ENCODE measurements at regions of chr1 and their contacts with region 1.

Region 1: DNA sequence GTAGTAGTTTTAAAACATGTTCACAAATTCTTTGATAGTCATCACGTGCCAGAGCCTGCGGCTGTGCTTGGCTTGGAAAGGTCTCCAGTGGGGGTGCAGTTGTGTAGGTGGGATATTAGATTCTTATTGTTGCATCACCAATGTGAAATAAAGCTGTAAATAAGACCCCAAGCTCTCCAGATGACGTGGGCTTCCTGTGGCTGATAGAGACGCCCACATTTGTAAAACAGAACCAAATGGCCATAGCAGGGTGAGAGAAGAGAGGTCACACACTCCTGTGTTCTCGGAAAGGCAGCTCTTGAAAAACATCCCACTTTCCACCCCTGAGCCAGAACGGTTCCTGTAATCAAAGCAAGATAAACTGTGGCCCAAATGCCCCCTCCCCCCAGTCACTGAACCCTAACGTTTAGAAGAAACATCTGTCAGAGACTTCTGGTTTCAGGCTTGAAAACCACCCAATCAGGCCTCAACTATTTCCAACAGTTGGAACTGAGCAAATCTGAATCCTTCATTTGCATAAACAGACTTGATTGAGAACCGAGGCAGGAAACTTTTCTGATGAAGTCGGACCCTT is 6.6 kb upstream of the NTPCR start:
- DNase-seq: no peak
- H3K4me3 ChIP-seq: no peak overlapping the region
- H3K27ac ChIP-seq: no peak overlapping the region
- H3K4me1 ChIP-seq: no peaks in the 10 kb centered on the region
- H3K27me3 ChIP-seq: no peaks in the 10 kb centered on the region
- CTCF ChIP-seq: no peak
- EP300 ChIP-seq: no peak
- POLR2A ChIP-seq: no peak

Region 2: DNA sequence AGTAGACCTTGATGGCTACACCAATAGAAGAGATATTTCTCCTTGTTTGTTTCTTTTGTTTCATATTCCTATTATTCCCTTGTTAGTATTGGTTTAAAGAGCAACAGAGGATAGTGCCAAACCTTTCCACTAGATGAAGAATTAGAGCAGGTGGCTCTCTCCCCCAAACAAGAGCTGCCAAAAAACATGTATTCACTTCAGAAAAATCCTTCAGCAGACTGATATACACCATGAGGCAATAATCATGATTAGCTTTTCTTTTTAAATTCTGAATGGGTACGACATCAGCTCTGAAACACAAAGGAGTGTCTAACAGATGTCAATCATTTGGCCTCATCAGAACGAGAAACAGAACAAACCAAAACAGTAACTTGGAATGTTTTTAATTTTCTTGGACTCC is 205.8 kb before region 1 on chr1:
- in situ Hi-C with region 1: no loop called
- intact Hi-C with region 1: no loop called
- DNase-seq: no peak
- H3K4me3 ChIP-seq: no peak overlapping the region
- H3K27ac ChIP-seq: no peak overlapping the region
- H3K4me1 ChIP-seq: no peaks in the 10 kb centered on the region
- H3K27me3 ChIP-seq: no peaks in the 10 kb centered on the region
- CTCF ChIP-seq: no peak
- EP300 ChIP-seq: no peak
- POLR2A ChIP-seq: no peak

Region 3: DNA sequence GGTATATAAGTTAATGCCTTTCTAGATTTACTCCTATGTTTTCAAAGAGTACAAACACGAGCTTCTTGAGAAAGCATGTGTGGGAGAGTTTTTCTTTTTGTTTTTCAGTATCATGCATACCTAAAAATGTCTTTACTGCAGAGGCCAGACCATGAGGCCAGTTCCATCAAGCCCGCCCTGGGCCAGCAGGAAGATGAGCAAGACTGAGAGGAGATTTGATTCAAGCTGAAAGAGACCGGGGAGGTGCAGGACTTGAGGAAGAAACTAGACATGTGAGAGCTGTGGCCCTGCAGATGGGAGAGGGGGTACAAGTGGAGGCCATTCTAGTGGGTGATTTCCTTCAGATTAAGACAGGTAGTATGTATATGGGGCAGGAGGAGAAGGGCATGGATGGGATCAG is 26.7 kb before region 1 on chr1:
- in situ Hi-C with region 1: no loop called
- intact Hi-C with region 1: loop called (anchors 1 kb)
- DNase-seq: no peak
- H3K4me3 ChIP-seq: no peak overlapping the region
- H3K27ac ChIP-seq: no peak overlapping the region
- H3K4me1 ChIP-seq: peaks cover 0 to 10% (median 0%) of the 10 kb centered on the region in 4 donors
- H3K27me3 ChIP-seq: no peaks in the 10 kb centered on the region
- CTCF ChIP-seq: no peak
- EP300 ChIP-seq: no peak
- POLR2A ChIP-seq: no peak

Region 4: DNA sequence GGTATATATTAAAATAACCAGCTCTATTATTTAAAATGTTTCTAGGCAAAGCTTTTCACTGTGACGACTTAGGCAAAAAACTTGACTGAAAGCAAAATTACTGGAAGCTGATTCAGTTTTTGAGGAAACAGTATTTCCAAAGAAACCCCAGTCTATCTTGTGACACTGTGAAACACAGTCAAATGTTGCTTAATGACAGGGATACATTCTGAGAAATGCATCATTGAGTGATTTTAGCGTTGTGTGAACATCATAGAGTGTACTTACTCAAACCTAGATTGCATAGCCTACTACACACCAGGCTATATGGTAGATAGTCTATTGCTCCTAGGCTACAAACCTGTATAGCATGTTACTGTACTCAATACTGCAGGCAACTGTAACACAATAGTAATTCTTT is 553.2 kb after region 1 on chr1:
- in situ Hi-C with region 1: no loop called
- intact Hi-C with region 1: no loop called
- DNase-seq: no peak
- H3K4me3 ChIP-seq: no peak overlapping the region
- H3K27ac ChIP-seq: no peak overlapping the region
- H3K4me1 ChIP-seq: no peaks in the 10 kb centered on the region
- H3K27me3 ChIP-seq: no peaks in the 10 kb centered on the region
- CTCF ChIP-seq: no peak
- EP300 ChIP-seq: no peak
- POLR2A ChIP-seq: no peak

Measured in transverse colon (tissue), 4 donors.